ENCODE measurements at regions of chr2 and their contacts with region 1.

Region 1: GRCh38 chr2:186862869-186863709 is 14.1 kb upstream of the ZSWIM2 start:
- DNase-seq: peak; percentile 85
- H3K4me3 ChIP-seq: no peak overlapping the region
- H3K27ac ChIP-seq: peak overlapping the region; percentile 39
- H3K4me1 ChIP-seq: peaks cover 16% of the 10 kb centered on the region
- H3K27me3 ChIP-seq: no peaks in the 10 kb centered on the region
- CTCF ChIP-seq: peak; percentile 36 to 53
- POLR2A ChIP-seq: no peak

Region 2: DNA sequence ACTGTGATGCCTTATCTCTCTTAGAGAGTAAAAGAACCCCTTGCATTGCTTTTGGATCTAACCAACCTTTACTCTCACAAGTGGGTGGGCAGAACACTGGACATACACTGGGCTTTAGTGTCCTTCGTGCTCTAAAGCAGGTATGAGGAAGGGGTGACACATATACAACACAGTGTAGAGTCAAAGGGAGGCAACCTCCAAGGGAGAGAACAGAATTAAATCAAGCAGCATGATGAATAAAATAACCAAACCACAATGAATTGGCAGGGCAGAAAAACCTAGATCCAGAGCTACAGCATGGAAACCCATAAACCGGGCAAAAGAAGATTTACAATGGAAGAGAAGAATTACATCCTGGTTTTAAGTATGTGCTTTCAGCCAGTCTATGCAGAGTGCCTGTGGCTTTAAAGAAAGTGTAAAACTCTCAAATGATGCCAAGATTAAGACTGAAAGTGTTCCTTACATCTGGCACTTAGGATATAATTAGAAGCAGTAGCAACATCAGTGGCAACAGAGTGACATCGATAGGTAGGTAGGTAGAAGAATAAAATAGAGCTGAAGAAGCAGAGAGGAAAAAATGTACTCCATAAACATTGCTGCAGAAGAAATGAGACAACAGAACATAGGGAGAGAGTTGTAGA is 568.7 kb before region 1 on chr2:
- CTCF ChIA-PET with region 1: no interaction called
- POLR2A ChIA-PET with region 1: no interaction called
- dilution Hi-C with region 1: no loop called
- intact Hi-C with region 1: no loop called
- DNase-seq: no peak
- H3K4me3 ChIP-seq: no peak overlapping the region
- H3K27ac ChIP-seq: no peak overlapping the region
- H3K4me1 ChIP-seq: no peaks in the 10 kb centered on the region
- H3K27me3 ChIP-seq: no peaks in the 10 kb centered on the region
- CTCF ChIP-seq: no peak
- POLR2A ChIP-seq: no peak

Region 3: DNA sequence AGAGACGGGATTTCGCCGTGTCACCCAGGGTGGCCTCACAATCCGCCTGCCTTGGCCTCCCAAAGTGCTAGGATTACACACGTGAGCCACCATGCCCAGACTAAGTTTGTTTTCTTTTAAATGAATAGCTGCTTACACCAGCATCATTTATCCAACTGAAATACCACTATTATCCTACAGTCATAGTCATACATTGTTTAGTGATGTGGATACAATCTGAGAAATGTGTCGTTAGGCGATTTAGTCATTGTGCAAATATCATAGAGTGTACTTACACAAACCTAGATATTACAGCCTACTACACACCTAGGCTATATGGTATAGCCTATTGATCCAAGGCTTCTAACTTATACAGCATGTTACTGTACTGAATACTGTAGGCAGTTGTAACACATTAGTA is 366.7 kb before region 1 on chr2:
- CTCF ChIA-PET with region 1: no interaction called
- POLR2A ChIA-PET with region 1: no interaction called
- dilution Hi-C with region 1: no loop called
- intact Hi-C with region 1: no loop called
- DNase-seq: no peak
- H3K4me3 ChIP-seq: no peak overlapping the region
- H3K27ac ChIP-seq: no peak overlapping the region
- H3K4me1 ChIP-seq: no peaks in the 10 kb centered on the region
- H3K27me3 ChIP-seq: no peaks in the 10 kb centered on the region
- CTCF ChIP-seq: no peak
- POLR2A ChIP-seq: no peak

Region 4: GRCh38 chr2:186820303-186820702 is 42.8 kb before region 1 on chr2:
- CTCF ChIA-PET with region 1: no interaction called
- POLR2A ChIA-PET with region 1: no interaction called
- dilution Hi-C with region 1: no loop called
- intact Hi-C with region 1: no loop called
- DNase-seq: no peak
- H3K4me3 ChIP-seq: no peak overlapping the region
- H3K27ac ChIP-seq: no peak overlapping the region
- H3K4me1 ChIP-seq: no peaks in the 10 kb centered on the region
- H3K27me3 ChIP-seq: peaks cover 0 to 2% of the 10 kb centered on the region in 2 experiments
- CTCF ChIP-seq: no peak
- POLR2A ChIP-seq: no peak

Region 5: DNA sequence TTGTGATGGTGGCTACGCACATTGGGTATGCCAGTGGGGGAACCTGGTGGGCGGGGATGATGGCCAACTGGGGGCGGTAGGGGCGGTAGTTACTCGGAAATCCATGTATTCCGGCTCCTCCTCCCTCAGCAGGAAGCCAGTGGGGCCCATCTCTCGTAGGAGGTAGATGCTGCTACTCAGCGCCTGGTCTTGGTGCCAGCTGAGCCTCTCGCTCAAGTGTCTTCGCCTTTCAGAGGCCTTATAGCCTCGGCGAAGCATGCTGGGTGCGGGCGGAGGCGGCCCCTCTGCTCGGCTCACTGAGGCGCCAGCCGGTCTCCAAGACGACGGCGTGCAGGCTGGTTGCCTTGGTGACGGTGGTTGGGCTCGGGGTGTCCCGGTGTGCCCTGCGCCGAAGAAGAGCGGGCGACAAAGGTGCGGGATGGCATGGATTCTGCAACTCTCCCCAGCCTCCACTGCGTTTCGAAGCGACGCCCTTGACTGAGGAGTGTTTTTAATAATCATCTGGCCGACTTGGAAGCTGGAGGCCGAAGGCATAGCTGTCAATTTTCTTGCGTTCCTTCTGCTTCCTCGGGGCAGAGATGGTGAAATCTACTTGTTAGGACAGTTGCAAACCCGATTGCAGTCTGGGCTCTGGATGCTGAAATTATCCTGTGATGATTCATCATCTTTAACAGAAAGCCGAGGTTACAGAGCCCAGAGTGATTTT is 14.1 kb before region 1 on chr2 and contains the start of gene ZSWIM2:
- CTCF ChIA-PET with region 1: interaction called, 21 read pairs
- POLR2A ChIA-PET with region 1: no interaction called
- dilution Hi-C with region 1: no loop called
- intact Hi-C with region 1: no loop called
- DNase-seq: peak; percentile 54
- H3K4me3 ChIP-seq: peak within 1 kb of the TSS; percentile 31 to 42 (median 41)
- H3K27ac ChIP-seq: no peak within 1 kb of the TSS
- H3K4me1 ChIP-seq: peaks cover 16% of the 10 kb centered on the region
- H3K27me3 ChIP-seq: no peaks in the 10 kb centered on the region
- CTCF ChIP-seq: peak in 1 of 2 donors; percentile 1
- POLR2A ChIP-seq: no peak
- total RNA-seq, gene ZSWIM2: not detected in 2 replicates

Region 6: DNA sequence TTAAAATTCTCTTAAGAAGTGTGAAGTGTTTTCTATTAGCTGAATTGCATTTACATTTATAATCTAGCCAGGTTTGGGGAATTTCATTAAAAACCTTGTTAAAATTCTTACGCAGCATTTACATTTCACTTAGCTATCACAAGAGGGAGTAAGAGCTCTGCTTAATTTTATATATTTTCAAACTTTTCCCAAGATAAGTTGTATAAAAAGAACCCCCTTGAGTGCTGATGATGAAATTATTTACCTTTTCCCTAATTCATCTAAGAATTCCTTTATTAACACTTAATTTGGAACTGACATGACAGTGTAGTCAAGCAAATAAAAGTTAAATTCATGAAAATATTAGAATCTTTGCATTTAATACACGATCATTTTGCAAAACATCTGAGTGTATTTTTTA is 40.1 kb after region 1 on chr2:
- CTCF ChIA-PET with region 1: interaction called, 86 read pairs
- POLR2A ChIA-PET with region 1: no interaction called
- dilution Hi-C with region 1: no loop called
- intact Hi-C with region 1: loop called (anchors 1 kb)
- DNase-seq: peak; percentile 56
- H3K4me3 ChIP-seq: no peak overlapping the region
- H3K27ac ChIP-seq: no peak overlapping the region
- H3K4me1 ChIP-seq: peaks cover 2% of the 10 kb centered on the region
- H3K27me3 ChIP-seq: no peaks in the 10 kb centered on the region
- CTCF ChIP-seq: peak in 1 of 2 donors; percentile 38
- POLR2A ChIP-seq: no peak

Region 7: DNA sequence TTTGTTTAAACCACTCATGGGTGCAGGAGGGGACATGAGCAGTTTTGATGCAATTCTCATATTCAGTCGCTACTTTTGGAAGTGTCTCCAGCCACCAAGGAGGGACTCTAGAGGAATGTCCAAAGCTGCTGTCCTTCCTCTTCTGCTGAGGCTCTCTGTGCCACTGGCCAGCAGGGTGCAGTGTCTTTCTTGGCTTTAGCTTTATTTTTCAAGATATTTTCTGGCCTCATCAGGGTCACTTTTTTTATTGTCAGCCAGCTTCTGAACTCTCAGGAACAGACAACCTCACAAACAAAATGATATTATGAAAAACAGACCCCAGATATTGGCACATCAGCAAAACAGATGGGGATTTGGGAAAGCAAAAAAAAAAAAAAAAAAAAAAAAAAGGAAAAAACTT is 275.2 kb after region 1 on chr2:
- CTCF ChIA-PET with region 1: interaction called, 18 read pairs
- POLR2A ChIA-PET with region 1: no interaction called
- dilution Hi-C with region 1: no loop called
- intact Hi-C with region 1: loop called (anchors 1 kb)
- DNase-seq: peak; percentile 81
- H3K4me3 ChIP-seq: no peak overlapping the region
- H3K27ac ChIP-seq: peak overlapping the region; percentile 1
- H3K4me1 ChIP-seq: peaks cover 30% of the 10 kb centered on the region
- H3K27me3 ChIP-seq: no peaks in the 10 kb centered on the region
- CTCF ChIP-seq: peak; percentile 70 to 80
- POLR2A ChIP-seq: no peak

Region 8: DNA sequence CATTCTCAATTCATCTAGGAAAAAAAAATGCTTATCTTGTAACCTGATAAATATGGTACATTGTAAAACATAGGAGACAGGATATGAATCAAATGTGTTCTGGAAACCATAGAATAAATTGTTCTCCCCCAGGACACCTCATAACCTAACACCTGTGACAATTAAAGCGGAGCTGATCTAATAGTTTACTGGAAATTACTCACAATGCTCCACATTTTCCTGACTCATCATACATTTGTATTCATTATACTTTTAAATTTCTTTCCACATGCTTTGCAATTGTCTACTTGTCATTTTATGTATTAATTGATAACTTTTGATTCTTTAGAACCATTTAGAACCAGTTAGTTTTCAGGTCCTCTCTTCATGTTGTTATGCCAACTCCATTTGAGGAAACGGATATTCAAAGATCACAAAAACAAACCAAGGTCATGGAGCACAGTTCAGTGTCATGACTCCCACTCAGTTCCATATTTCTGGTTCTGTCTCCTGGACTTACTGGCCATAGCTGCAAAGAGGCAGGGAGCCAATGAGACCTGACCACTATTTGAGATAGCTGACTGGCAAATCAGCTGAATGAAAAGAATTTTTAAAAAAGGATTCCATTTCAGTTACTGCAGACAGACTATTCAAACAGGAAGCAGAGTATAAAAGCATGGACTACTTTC is 456.5 kb after region 1 on chr2:
- CTCF ChIA-PET with region 1: interaction called, 10 read pairs
- POLR2A ChIA-PET with region 1: no interaction called
- dilution Hi-C with region 1: no loop called
- intact Hi-C with region 1: loop called (anchors 1 kb)
- DNase-seq: peak; percentile 96
- H3K4me3 ChIP-seq: peak overlapping the region in 1 of 3 experiments; percentile 3
- H3K27ac ChIP-seq: peak overlapping the region; percentile 94
- H3K4me1 ChIP-seq: peaks cover 47% of the 10 kb centered on the region
- H3K27me3 ChIP-seq: no peaks in the 10 kb centered on the region
- CTCF ChIP-seq: no peak
- POLR2A ChIP-seq: no peak

Region 9: DNA sequence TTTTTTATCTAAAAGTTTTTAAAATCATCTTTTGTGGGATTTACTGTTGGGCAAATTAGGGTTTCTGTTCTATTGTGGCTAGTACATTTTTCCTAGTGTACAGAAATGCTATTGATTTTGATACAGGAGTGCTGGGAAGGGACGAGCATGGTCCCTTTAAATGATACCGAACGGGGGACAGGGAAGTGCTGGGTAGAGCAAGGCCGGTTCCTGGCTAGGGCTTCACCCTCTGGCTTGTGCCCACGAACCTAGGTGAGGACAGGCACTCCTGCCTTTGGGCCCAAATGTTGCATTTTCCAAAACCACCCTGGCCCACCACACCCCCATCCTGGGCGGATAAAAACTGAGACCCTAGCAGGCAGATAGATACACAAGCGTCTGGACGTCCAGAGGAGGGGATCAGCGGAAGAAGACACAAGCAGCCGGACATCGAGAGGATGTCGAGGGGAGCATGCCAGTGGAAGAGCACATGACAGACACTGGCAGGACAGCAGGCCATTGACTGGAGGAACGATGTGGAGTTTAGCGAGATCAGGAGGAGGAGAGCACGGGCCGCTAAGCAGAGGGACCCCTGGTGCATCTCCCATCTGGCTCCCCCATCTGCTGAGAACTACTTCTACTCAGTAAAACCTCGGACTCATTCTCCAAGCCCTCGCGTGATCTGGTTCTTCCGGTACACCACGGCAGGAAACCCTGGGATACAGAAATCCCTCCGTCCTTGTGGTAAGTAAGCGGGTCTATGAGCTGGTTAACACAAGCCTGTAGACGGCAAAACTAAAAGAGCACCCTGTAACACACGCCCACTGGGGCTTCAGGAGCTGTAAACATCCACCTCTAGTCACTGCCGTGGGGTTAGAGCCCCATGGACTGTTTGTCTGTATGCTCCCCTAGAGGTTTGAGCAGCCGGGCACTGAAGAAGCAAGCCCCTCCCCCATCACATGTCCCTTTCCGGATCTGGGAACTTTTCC is 598.5 kb after region 1 on chr2:
- CTCF ChIA-PET with region 1: interaction called, 40 read pairs
- POLR2A ChIA-PET with region 1: no interaction called
- dilution Hi-C with region 1: no loop called
- intact Hi-C with region 1: no loop called
- DNase-seq: peak; percentile 40
- H3K4me3 ChIP-seq: no peak overlapping the region
- H3K27ac ChIP-seq: no peak overlapping the region
- H3K4me1 ChIP-seq: peaks cover 5% of the 10 kb centered on the region
- H3K27me3 ChIP-seq: no peaks in the 10 kb centered on the region
- CTCF ChIP-seq: no peak
- POLR2A ChIP-seq: no peak